ENCODE measurements at regions of chr12 and their contacts with region 1.

Region 1: DNA sequence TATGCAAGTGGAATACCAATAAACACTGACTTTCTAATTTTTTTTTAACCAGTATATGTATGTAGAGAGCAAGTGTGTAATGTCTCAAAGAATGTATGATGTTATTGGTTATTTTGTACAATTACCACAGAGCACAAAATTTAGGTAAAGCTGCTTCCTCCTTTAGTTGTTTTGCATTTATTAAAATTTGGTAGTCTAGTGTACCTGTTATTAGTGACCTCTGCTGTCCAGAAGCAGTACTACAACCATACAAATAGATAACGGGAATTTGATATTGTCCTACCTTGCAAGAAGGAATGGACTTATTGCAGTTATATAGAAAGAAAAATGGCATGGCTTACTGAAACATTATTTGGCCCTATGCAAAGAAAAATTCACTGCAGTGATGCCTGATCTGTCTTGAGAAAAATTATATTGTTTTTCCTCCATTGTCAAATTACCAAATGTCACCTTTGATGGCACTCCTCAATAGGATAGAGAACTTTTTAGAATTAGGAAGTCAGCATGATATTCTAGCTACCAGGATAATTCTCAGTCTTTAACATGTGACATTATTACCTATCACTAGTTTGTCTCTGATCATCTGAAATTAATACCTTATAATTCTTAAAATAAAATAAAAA is 153.9 kb upstream of the RMST start:
- DNase-seq: peak; percentile 33
- H3K4me3 ChIP-seq: no peak overlapping the region
- H3K27ac ChIP-seq: no peak overlapping the region
- H3K4me1 ChIP-seq: no peaks in the 10 kb centered on the region
- H3K27me3 ChIP-seq: no peaks in the 10 kb centered on the region
- CTCF ChIP-seq: peak; percentile 35 to 73 (median 70)
- POLR2A ChIP-seq: no peak

Region 2: GRCh38 chr12:96587691-96588090 is 721.0 kb before region 1 on chr12:
- intact Hi-C with region 1: loop called (anchors 10 kb)
- DNase-seq: no peak
- H3K4me3 ChIP-seq: no peak overlapping the region
- H3K27ac ChIP-seq: no peak overlapping the region
- H3K4me1 ChIP-seq: no peaks in the 10 kb centered on the region
- H3K27me3 ChIP-seq: no peaks in the 10 kb centered on the region
- CTCF ChIP-seq: no peak
- POLR2A ChIP-seq: no peak

Region 3: GRCh38 chr12:96861656-96862055 is 447.0 kb before region 1 on chr12:
- intact Hi-C with region 1: no loop called
- DNase-seq: no peak
- H3K4me3 ChIP-seq: no peak overlapping the region
- H3K27ac ChIP-seq: no peak overlapping the region
- H3K4me1 ChIP-seq: no peaks in the 10 kb centered on the region
- H3K27me3 ChIP-seq: no peaks in the 10 kb centered on the region
- CTCF ChIP-seq: no peak
- POLR2A ChIP-seq: no peak

Region 4: GRCh38 chr12:97968641-97969197 is 660.0 kb after region 1 on chr12:
- intact Hi-C with region 1: no loop called
- DNase-seq: no peak
- H3K4me3 ChIP-seq: no peak overlapping the region
- H3K27ac ChIP-seq: no peak overlapping the region
- H3K4me1 ChIP-seq: no peaks in the 10 kb centered on the region
- H3K27me3 ChIP-seq: no peaks in the 10 kb centered on the region
- CTCF ChIP-seq: no peak
- POLR2A ChIP-seq: no peak

Measured in prostate gland (tissue), 2 donors.